Spleen (tissue), 13 donors: ENCODE measurements at regions of chr4 and their contacts with region 1.

Region 1: GRCh38 chr4:13548984-13549546 is 4.8 kb upstream of the NKX3-2 start:
- DNase-seq: peak; percentile 92
- H3K4me3 ChIP-seq: peak overlapping the region in 6 of 8 donors; percentile 13 to 61 (median 26)
- H3K27ac ChIP-seq: no peak overlapping the region
- H3K4me1 ChIP-seq: peaks cover 18 to 55% (median 43%) of the 10 kb centered on the region in 6 donors
- H3K27me3 ChIP-seq: peaks cover 8 to 90% (median 61%) of the 10 kb centered on the region in 7 donors
- CTCF ChIP-seq: peak; percentile 44 to 89 (median 77)
- POLR2A ChIP-seq: no peak

Region 2: DNA sequence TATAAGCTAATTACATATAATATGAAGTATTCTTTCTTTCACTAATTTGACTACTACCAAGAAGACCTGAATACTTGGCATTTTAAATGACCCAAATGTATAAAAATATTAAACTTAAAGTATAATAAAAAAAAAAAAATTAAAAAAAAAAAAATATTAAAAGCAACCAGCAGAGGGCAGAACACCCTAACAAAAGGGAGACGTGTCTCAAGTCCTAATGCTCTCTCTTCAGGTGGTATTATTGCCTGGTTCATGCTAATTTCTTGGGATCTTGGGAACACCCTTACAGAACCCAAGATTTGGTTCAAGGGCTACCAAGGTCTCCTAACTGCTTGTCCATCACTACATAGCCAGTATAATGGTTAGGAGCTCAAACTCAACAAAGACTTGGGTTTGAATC is 819.7 kb before region 1 on chr4:
- intact Hi-C with region 1: loop called (anchors 5 kb)
- DNase-seq: no peak
- H3K4me3 ChIP-seq: no peak overlapping the region
- H3K27ac ChIP-seq: no peak overlapping the region
- H3K4me1 ChIP-seq: no peaks in the 10 kb centered on the region
- H3K27me3 ChIP-seq: peaks cover 0 to 9% (median 0%) of the 10 kb centered on the region in 7 donors
- CTCF ChIP-seq: peak in 1 of 11 experiments; percentile 43
- POLR2A ChIP-seq: no peak

Region 3: GRCh38 chr4:12852338-12853307 is 696.4 kb before region 1 on chr4:
- intact Hi-C with region 1: loop called (anchors 5 kb)
- DNase-seq: no peak
- H3K4me3 ChIP-seq: no peak overlapping the region
- H3K27ac ChIP-seq: no peak overlapping the region
- H3K4me1 ChIP-seq: peaks cover 0 to 6% (median 0%) of the 10 kb centered on the region in 6 donors
- H3K27me3 ChIP-seq: no peaks in the 10 kb centered on the region
- CTCF ChIP-seq: peak in 9 of 11 experiments; percentile 6 to 58 (median 46)
- POLR2A ChIP-seq: no peak

Region 4: DNA sequence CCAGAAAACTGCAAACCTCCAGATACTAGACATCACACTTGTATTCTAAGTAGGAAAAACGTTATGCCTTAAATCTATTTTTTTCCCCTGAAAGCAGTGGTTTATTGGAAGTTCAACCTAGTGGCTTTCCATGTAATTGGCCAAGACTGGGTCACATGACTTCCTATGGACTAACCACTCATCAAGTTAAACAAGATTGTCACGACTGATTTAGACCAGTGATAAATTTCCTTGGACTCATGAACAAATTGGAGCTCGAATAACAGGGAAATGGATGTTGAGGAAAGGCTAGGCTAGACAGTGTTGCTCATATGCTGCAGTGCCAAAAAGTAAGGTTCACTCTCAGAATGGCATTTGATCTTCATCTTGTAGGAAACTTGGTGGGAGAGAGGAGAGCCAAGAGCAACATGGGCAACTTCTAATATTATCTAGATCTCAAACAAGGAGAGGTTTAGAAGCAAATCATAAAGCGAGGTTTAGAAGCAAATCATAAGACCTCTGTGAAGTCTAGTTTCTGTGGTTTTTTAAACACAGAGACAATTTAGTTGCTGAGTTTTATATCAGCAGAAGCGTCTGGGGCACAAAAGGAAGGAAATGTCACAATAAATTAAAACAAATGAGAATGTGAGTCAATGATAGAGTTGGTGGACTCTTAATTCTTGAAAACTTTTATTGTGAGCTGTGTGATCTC is 244.1 kb after region 1 on chr4:
- intact Hi-C with region 1: no loop called
- DNase-seq: no peak
- H3K4me3 ChIP-seq: no peak overlapping the region
- H3K27ac ChIP-seq: no peak overlapping the region
- H3K4me1 ChIP-seq: no peaks in the 10 kb centered on the region
- H3K27me3 ChIP-seq: no peaks in the 10 kb centered on the region
- CTCF ChIP-seq: no peak
- POLR2A ChIP-seq: no peak